T-cell (primary cell): ENCODE measurements at regions of chr5 and their contacts with region 1.

Region 1: GRCh38 chr5:168674893-168675482 is 95.8 kb upstream of the PANK3 start:
- DNase-seq: no peak
- ATAC-seq: no peak
- H3K4me3 ChIP-seq: no peak overlapping the region
- H3K4me3 Mint-ChIP-seq: no peak overlapping the region
- H3K27ac ChIP-seq: no peak overlapping the region
- H3K27ac Mint-ChIP-seq: no peak overlapping the region
- H3K4me1 ChIP-seq: peaks cover 0 to 3% of the 10 kb centered on the region in 2 experiments
- H3K4me1 Mint-ChIP-seq: no peaks in the 10 kb centered on the region
- H3K27me3 ChIP-seq: peaks cover 0 to 7% of the 10 kb centered on the region in 2 experiments
- H3K27me3 Mint-ChIP-seq: peaks cover 0 to 4% of the 10 kb centered on the region in 2 donors

Region 2: DNA sequence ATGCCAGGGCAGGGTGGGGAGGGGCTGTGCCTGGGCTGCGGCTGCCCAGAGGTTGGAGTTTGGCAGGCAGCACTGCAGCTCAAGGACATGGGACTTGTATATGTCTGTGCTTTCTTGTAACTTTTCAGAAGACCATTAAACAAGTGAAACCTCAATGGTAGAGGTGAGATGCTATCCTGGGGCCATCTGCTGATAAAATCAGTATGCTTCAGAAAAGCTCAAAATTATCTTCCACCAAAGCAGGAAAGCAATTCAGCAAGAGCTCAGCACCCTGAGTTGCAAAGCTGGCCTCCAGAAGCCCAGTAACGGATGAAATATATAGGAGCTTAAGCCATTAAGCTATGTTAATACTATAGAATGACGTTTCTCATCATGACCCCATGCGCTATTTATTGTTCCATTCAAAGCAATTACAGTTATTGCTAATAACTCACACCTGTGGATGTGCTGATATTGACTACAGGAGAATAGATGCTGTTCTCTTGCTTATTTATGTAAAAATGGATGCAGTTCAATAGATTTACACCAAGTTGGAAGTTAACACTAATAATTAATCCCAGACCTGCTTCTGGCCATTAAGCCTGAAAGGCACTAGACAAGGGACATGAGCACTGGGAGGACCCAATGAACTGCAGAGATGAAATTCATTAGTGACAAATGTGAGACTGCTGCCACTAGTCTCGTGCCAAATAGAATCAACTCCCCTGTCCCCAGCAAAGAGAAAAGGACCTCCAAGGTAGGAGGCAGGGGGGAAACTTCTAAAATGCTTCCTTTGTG is 220.5 kb after region 1 on chr5:
- CTCF ChIA-PET with region 1: no interaction called
- POLR2A ChIA-PET with region 1: interaction called in 1 of 2 experiments, 11 read pairs
- DNase-seq: no peak
- ATAC-seq: no peak
- H3K4me3 ChIP-seq: no peak overlapping the region
- H3K4me3 Mint-ChIP-seq: no peak overlapping the region
- H3K27ac ChIP-seq: no peak overlapping the region
- H3K27ac Mint-ChIP-seq: no peak overlapping the region
- H3K4me1 ChIP-seq: no peaks in the 10 kb centered on the region
- H3K4me1 Mint-ChIP-seq: peaks cover 0 to 6% (median 0%) of the 10 kb centered on the region in 3 donors
- H3K27me3 ChIP-seq: peaks cover 0 to 9% of the 10 kb centered on the region in 2 experiments
- H3K27me3 Mint-ChIP-seq: peaks cover 11 to 22% of the 10 kb centered on the region in 2 donors

Region 3: GRCh38 chr5:168931638-168932345 is 256.8 kb after region 1 on chr5:
- CTCF ChIA-PET with region 1: no interaction called
- POLR2A ChIA-PET with region 1: no interaction called
- DNase-seq: no peak
- ATAC-seq: no peak
- H3K4me3 ChIP-seq: no peak overlapping the region
- H3K4me3 Mint-ChIP-seq: no peak overlapping the region
- H3K27ac ChIP-seq: no peak overlapping the region
- H3K27ac Mint-ChIP-seq: no peak overlapping the region
- H3K4me1 ChIP-seq: no peaks in the 10 kb centered on the region
- H3K4me1 Mint-ChIP-seq: no peaks in the 10 kb centered on the region
- H3K27me3 ChIP-seq: no peaks in the 10 kb centered on the region
- H3K27me3 Mint-ChIP-seq: peaks cover 3 to 14% of the 10 kb centered on the region in 2 donors